Mammary epithelial cell (primary cell): ENCODE measurements at regions of chr19 and their contacts with region 1.

Region 1: DNA sequence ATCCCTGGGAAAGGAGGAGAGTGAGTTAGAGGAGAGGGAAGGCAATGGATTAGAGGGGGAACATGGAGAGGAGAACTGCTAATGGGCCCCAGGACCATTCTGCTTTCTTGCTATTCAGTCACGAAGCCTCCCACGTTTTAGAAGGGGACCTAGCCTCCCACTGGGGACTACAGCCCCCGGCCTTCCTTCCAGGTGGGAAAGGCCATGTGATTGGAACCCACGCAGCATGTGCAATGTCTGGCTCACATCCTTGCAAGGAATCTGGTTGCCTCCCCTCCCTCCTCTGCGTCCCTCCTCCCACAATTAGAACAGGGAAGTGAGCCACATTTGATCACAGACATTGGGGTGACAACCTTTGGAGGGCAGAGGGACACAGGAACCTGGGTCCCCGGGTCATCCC is 22.5 kb upstream of the PLA2G4C start:
- DNase-seq: no peak
- H3K4me3 ChIP-seq: no peak overlapping the region
- H3K27ac ChIP-seq: no peak overlapping the region
- H3K4me1 ChIP-seq: no peaks in the 10 kb centered on the region
- H3K27me3 ChIP-seq: no peaks in the 10 kb centered on the region
- CTCF ChIP-seq: no peak

Region 2: DNA sequence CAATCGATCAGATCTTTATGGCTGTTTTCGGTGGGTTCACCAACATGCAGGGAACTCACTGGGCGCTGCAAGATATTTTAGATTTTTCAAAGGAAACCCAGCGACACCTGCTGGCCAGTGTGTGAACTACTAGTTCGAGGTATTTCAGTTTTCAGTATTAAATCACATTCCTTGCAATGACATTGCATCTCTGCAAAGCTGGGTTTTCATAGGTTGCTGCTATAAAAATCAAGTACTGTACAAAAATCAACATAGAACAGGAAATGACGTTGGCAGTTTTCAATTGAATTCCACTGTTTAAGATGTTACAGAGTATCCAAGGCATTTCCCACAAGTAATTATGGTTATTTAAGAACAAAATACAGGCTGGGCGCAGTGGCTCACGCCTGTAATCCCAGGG is 19.5 kb after region 1 on chr19:
- CTCF ChIA-PET with region 1: no interaction called
- dilution Hi-C with region 1: no loop called
- in situ Hi-C with region 1: no loop called
- intact Hi-C with region 1: no loop called
- DNase-seq: peak; percentile 20
- H3K4me3 ChIP-seq: no peak overlapping the region
- H3K27ac ChIP-seq: no peak overlapping the region
- H3K4me1 ChIP-seq: no peaks in the 10 kb centered on the region
- H3K27me3 ChIP-seq: no peaks in the 10 kb centered on the region
- CTCF ChIP-seq: peak; percentile 68 to 71

Region 3: DNA sequence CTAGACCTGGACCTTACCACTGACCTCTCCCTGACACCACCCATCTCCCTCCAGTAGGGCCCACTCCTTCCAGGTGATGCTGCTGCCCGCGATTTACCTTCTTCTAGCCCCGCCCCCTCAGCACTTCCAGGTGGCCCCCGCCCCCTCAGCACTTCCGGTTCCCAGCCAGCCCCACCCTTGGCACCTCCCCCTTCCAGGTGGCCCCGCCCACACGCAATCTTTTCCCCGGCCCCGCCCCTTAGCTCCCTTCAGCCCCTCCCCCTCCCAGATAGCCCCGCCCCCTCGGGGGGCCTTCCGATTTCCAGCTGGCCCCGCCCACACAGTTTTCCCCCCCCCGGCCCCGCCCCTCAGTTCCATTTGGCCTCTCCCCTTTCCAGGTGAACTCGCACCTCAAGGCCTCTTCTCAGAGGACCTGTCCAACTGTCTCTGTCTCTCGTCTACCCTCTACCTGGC is 36.5 kb after region 1 on chr19:
- CTCF ChIA-PET with region 1: no interaction called
- dilution Hi-C with region 1: loop called (anchors 5 kb)
- in situ Hi-C with region 1: no loop called
- intact Hi-C with region 1: no loop called
- DNase-seq: peak; percentile 66
- H3K4me3 ChIP-seq: peak overlapping the region; percentile 93 to 100 (median 97)
- H3K27ac ChIP-seq: peak overlapping the region; percentile 71
- H3K4me1 ChIP-seq: peaks cover 10% of the 10 kb centered on the region
- H3K27me3 ChIP-seq: no peaks in the 10 kb centered on the region
- CTCF ChIP-seq: no peak

Region 4: GRCh38 chr19:48194041-48194871 is 61.2 kb after region 1 on chr19:
- CTCF ChIA-PET with region 1: no interaction called
- dilution Hi-C with region 1: no loop called
- in situ Hi-C with region 1: no loop called
- intact Hi-C with region 1: no loop called
- DNase-seq: no peak
- H3K4me3 ChIP-seq: no peak overlapping the region
- H3K27ac ChIP-seq: no peak overlapping the region
- H3K4me1 ChIP-seq: no peaks in the 10 kb centered on the region
- H3K27me3 ChIP-seq: no peaks in the 10 kb centered on the region
- CTCF ChIP-seq: peak; percentile 26 to 34

Region 5: GRCh38 chr19:48210005-48210404 is 76.9 kb after region 1 on chr19:
- CTCF ChIA-PET with region 1: no interaction called
- dilution Hi-C with region 1: loop called (anchors 5 kb)
- in situ Hi-C with region 1: no loop called
- intact Hi-C with region 1: no loop called
- DNase-seq: no peak
- H3K4me3 ChIP-seq: no peak overlapping the region
- H3K27ac ChIP-seq: no peak overlapping the region
- H3K4me1 ChIP-seq: peaks cover under 1% of the 10 kb centered on the region
- H3K27me3 ChIP-seq: no peaks in the 10 kb centered on the region
- CTCF ChIP-seq: no peak